ENCODE measurements at regions of chrX and their contacts with region 1.

Region 1: DNA sequence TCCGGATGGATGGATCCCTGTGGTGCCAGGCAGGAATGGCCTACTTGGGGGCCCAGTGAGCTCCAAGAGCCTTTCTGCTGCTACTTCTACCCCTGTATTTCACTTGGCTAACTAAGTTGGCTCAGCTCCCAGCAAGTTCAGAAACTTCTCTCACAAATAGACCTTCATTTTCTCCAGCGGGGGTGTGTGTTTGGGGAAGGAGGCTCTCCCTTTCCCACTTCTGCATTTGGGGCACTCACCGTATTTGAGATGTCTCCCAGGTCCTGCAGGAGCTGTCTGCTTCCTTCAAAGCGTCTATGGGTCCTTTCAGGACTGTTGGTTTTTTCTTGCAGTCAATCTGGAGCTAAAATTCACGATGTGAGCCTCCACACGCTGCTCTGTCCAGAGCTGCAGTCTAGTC is 197.7 kb downstream of the SPANXN3 start:
- DNase-seq: no peak
- ATAC-seq: no peak
- H3K4me3 ChIP-seq: no peak overlapping the region
- H3K27ac ChIP-seq: no peak overlapping the region
- H3K4me1 ChIP-seq: no peaks in the 10 kb centered on the region
- H3K27me3 ChIP-seq: no peaks in the 10 kb centered on the region
- CTCF ChIP-seq: no peak

Region 2: DNA sequence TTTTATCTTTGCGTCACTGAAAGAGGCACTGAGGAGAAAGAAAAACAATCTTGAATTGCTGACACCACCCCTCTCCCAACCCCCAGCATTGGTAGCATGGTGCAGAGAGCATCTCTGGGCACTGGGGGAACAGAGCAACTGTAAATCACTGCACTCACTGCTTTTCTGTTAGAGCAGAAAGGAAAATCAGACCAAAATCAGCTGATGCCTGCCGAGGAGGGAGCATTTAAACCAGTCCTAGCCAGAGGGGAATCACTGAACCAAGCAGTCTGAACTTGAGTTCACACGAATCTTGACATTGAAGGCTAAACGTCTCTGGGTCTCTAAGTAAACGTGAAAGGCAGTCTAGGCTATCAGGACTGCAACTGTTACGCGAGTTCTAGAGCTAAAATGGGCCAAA is 88.0 kb before region 1 on chrX:
- intact Hi-C with region 1: no loop called
- DNase-seq: no peak
- ATAC-seq: no peak
- H3K4me3 ChIP-seq: no peak overlapping the region
- H3K27ac ChIP-seq: no peak overlapping the region
- H3K4me1 ChIP-seq: no peaks in the 10 kb centered on the region
- H3K27me3 ChIP-seq: no peaks in the 10 kb centered on the region
- CTCF ChIP-seq: no peak

Region 3: GRCh38 chrX:144006811-144007210 is 687.3 kb after region 1 on chrX:
- intact Hi-C with region 1: loop called in 1 of 2 experiments (anchors 5 kb)
- DNase-seq: no peak
- ATAC-seq: no peak
- H3K4me3 ChIP-seq: no peak overlapping the region
- H3K27ac ChIP-seq: no peak overlapping the region
- H3K4me1 ChIP-seq: no peaks in the 10 kb centered on the region
- H3K27me3 ChIP-seq: no peaks in the 10 kb centered on the region
- CTCF ChIP-seq: no peak

Measured in psoas muscle (tissue), 8 donors.